SK-N-SH (cell line): ENCODE measurements at regions of chr17 and their contacts with region 1.

Region 1: DNA sequence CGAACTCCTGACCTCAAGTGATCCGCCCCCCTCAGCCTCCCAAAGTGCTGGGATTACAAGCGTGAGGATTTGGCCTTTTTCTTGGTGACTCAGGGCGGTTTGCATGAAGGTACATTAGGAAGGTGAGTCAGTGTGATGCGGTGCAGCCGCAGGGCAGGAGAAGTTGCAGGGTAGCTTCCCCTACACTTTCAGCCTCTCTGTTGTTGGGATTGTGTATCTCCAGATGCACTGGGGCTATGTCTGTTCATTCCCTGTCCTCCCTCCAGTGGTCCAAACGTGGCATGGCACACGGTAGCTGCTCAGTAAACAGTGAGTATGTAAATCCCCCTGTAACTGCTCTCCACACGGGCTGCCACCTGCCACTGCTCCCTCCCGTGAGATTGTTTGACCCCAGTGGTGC is 109.1 kb upstream of the CDC42EP4 start:
- DNase-seq: peak; percentile 68
- H3K4me3 ChIP-seq: no peak overlapping the region
- H3K27ac ChIP-seq: no peak overlapping the region
- H3K4me1 ChIP-seq: no peaks in the 10 kb centered on the region; a peak in 1 of 4 replicates
- H3K27me3 ChIP-seq: no peaks in the 10 kb centered on the region
- CTCF ChIP-seq: peak; percentile 35
- EP300 ChIP-seq: no peak
- RAD21 ChIP-seq: peak; percentile 22; the same call in 1 of the 2 replicates

Region 2: GRCh38 chr17:73410586-73411312 is 10.1 kb before region 1 on chr17:
- CTCF ChIA-PET with region 1: interaction called, 16 read pairs
- POLR2A ChIA-PET with region 1: no interaction called
- DNase-seq: no peak
- H3K4me3 ChIP-seq: no peak overlapping the region
- H3K27ac ChIP-seq: no peak overlapping the region
- H3K4me1 ChIP-seq: no peaks in the 10 kb centered on the region
- H3K27me3 ChIP-seq: no peaks in the 10 kb centered on the region
- CTCF ChIP-seq: no peak
- EP300 ChIP-seq: no peak
- RAD21 ChIP-seq: no peak